GM23248 (cell line): ENCODE measurements at regions of chr11 and their contacts with region 1.

Region 1: GRCh38 chr11:115324581-115325432 is 179.4 kb downstream of the CADM1 start:
- DNase-seq: peak; percentile 63
- H3K4me3 ChIP-seq: no peak overlapping the region
- H3K27ac ChIP-seq: no peak overlapping the region
- H3K4me1 ChIP-seq: no peaks in the 10 kb centered on the region
- H3K27me3 ChIP-seq: peaks cover 10% of the 10 kb centered on the region

Region 2: GRCh38 chr11:116691771-116692177 is 1367.0 kb after region 1 on chr11:
- in situ Hi-C with region 1: loop called (anchors 25 kb)
- DNase-seq: peak; percentile 52
- H3K4me3 ChIP-seq: no peak overlapping the region
- H3K27ac ChIP-seq: no peak overlapping the region
- H3K4me1 ChIP-seq: no peaks in the 10 kb centered on the region
- H3K27me3 ChIP-seq: no peaks in the 10 kb centered on the region; the same call in none of the 2 replicates